Vagina (tissue), 2 donors: ENCODE measurements at regions of chr5 and their contacts with region 1.

Region 1: DNA sequence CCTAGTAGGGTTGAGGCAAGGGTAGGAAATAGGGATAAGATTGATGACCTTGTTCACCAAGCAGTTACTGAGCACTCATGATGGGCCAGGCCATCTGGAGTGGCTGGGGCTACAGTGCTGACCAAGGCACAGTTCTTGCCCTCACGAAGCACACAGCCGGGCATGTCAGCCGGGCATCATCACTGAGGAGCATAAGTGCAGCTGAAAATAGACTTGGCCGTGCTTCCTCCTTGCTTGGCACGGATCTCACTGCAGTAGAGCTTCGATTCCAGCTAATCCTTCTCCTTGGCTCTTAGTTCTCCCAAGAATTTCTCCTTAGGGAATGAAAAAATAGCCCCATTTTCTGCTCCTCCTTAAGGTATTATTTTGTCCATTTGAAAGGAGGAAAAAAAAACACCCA is 116.6 kb downstream of the NMUR2 start:
- DNase-seq: no peak
- H3K4me3 ChIP-seq: no peak overlapping the region
- H3K27ac ChIP-seq: peak overlapping the region; percentile 42
- H3K4me1 ChIP-seq: peaks cover 9% of the 10 kb centered on the region
- H3K27me3 ChIP-seq: no peaks in the 10 kb centered on the region
- CTCF ChIP-seq: no peak
- POLR2A ChIP-seq: no peak

Region 2: DNA sequence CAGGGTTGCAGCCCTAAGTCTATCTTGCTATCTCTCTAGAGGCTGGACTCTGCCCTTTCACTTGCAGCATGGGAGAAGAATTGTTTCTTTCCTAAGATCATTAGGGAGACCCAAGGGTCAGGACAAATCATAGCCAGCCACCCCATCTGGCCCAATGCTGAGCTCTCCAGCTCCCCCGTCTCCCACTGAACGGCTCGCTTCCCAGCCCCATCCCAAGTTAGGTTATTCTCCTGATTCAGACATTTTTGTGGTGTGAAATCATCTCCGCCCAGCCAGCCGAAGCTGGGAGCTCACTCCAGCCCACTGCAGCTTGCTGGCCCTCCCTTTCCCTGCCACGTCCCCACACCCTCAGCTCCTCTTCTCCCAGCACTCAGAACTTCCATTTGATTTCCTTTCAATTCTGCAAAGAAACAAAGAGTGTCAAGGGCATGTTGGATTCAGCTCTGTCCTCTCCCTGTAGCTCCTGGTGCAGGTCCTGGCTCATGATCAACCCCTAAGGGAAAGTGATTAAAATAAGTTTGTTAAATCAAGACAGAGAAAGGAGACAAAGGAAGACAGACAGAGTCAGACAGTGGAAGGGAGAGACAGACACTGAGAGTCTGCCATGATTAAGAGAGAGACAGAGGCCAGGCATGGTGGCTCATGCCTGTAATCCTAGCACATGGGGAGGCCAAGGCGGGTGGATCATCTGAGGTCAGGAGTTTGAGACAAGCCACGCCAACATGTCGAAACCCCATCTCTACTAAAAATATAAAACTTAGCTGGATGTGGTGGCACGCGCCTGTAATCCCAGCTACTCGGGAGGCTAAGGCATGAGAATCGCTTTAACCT is 589.2 kb before region 1 on chr5:
- intact Hi-C with region 1: no loop called
- DNase-seq: peak in 1 of 2 donors; percentile 94
- H3K4me3 ChIP-seq: no peak overlapping the region
- H3K27ac ChIP-seq: peak overlapping the region; percentile 91
- H3K4me1 ChIP-seq: peaks cover 41% of the 10 kb centered on the region
- H3K27me3 ChIP-seq: no peaks in the 10 kb centered on the region
- CTCF ChIP-seq: no peak
- POLR2A ChIP-seq: no peak

Region 3: GRCh38 chr5:151779636-151780035 is 508.9 kb before region 1 on chr5:
- intact Hi-C with region 1: loop called (anchors 5 kb)
- DNase-seq: no peak
- H3K4me3 ChIP-seq: no peak overlapping the region
- H3K27ac ChIP-seq: no peak overlapping the region
- H3K4me1 ChIP-seq: peaks cover 98% of the 10 kb centered on the region
- H3K27me3 ChIP-seq: no peaks in the 10 kb centered on the region
- CTCF ChIP-seq: no peak
- POLR2A ChIP-seq: no peak